Activated CD4-positive, alpha-beta memory T cell treated with anti-CD3 and anti-CD28 coated beads, Interleukin-2, amount 10 ng/mL, durations not matched to agents 7 days and 5 days (primary cell): ENCODE measurements at regions of chr19 and their contacts with region 1.

Region 1: GRCh38 chr19:29831041-29831548 is 19.3 kb downstream of the CCNE1 start:
- DNase-seq: peak; percentile 74
- H3K4me3 Mint-ChIP-seq: peak overlapping the region; percentile 73
- H3K27ac Mint-ChIP-seq: peak overlapping the region; percentile 98
- H3K4me1 Mint-ChIP-seq: peaks cover 48% of the 10 kb centered on the region
- H3K27me3 Mint-ChIP-seq: no peaks in the 10 kb centered on the region

Region 2: GRCh38 chr19:29844891-29845572 is 13.9 kb after region 1 on chr19:
- CTCF ChIA-PET with region 1: interaction called, 5 read pairs
- POLR2A ChIA-PET with region 1: interaction called, 43 read pairs
- DNase-seq: peak; percentile 94
- H3K4me3 Mint-ChIP-seq: peak overlapping the region; percentile 80
- H3K27ac Mint-ChIP-seq: peak overlapping the region; percentile 78
- H3K4me1 Mint-ChIP-seq: peaks cover 17% of the 10 kb centered on the region
- H3K27me3 Mint-ChIP-seq: peaks cover 13% of the 10 kb centered on the region